Activated CD4-positive, alpha-beta T cell treated with anti-CD3 and anti-CD28 coated beads for 36 hours (primary cell): ENCODE measurements at regions of chr4 and their contacts with region 1.

Region 1: GRCh38 chr4:876780-877179 is 50.9 kb upstream of the CPLX1 start:
- DNase-seq: peak; percentile 30
- ATAC-seq: no peak
- H3K4me3 Mint-ChIP-seq: no peak overlapping the region
- H3K27ac Mint-ChIP-seq: no peak overlapping the region
- H3K4me1 Mint-ChIP-seq: peaks cover 28% of the 10 kb centered on the region
- H3K27me3 Mint-ChIP-seq: no peaks in the 10 kb centered on the region

Region 2: DNA sequence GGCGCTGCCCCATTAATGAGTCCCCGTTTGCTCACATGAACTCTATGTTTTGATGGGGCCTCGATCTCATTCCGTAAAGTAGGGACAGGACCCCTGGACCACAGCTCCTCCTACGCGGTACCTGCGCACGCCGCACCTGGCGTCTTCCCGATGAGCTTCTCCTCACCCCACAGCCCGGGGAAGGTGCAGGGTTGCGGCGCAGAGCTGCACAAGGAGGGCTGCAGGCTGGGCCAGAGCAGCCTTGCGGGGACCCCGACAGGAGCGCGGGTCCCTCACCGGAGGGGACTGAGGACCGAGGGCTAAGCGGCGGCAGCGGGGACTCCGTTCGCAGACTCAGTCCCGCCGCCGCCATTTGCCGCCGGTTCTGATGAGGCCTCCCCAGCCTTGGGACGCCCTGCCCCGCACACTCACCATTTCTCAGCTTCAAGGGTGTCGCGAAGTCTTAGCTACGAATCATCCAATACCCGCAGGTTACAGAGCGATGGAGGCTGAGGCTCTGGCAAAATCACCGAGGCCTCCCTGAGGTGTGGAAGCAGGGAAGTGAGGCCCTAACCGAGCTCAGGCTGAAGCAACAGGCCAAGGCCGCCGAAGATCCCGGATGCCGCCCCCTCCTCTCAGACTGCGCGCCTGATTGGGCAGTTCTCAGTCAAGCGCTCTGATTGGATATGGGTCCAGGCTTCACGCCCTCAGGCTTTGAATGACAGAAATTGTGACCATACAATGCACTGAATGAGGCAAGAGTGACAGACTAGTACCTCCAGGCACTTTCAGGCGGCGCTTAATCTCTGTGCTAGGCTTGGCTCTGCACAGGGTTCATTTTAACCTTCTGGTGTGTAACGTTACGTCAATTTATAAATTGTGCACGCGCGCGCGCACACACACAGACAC is 403.0 kb before region 1 on chr4:
- CTCF ChIA-PET with region 1: no interaction called
- POLR2A ChIA-PET with region 1: no interaction called
- intact Hi-C with region 1: no loop called
- DNase-seq: peak; percentile 96
- ATAC-seq: peak; percentile 99
- H3K4me3 Mint-ChIP-seq: peak overlapping the region; percentile 98
- H3K27ac Mint-ChIP-seq: peak overlapping the region; percentile 100
- H3K4me1 Mint-ChIP-seq: peaks cover 38% of the 10 kb centered on the region
- H3K27me3 Mint-ChIP-seq: no peaks in the 10 kb centered on the region

Region 3: GRCh38 chr4:742742-743311 is 134.0 kb before region 1 on chr4:
- CTCF ChIA-PET with region 1: no interaction called
- POLR2A ChIA-PET with region 1: no interaction called
- intact Hi-C with region 1: loop called in 1 of 2 experiments (anchors 5 kb)
- DNase-seq: peak; percentile 89
- ATAC-seq: peak; percentile 95
- H3K4me3 Mint-ChIP-seq: no peak overlapping the region
- H3K27ac Mint-ChIP-seq: no peak overlapping the region
- H3K4me1 Mint-ChIP-seq: no peaks in the 10 kb centered on the region
- H3K27me3 Mint-ChIP-seq: no peaks in the 10 kb centered on the region

Region 4: GRCh38 chr4:825238-825835 is 51.4 kb before region 1 on chr4:
- CTCF ChIA-PET with region 1: no interaction called
- POLR2A ChIA-PET with region 1: no interaction called
- intact Hi-C with region 1: loop called in 1 of 2 experiments (anchors 2 kb)
- DNase-seq: peak; percentile 50
- ATAC-seq: peak; percentile 37
- H3K4me3 Mint-ChIP-seq: no peak overlapping the region
- H3K27ac Mint-ChIP-seq: no peak overlapping the region
- H3K4me1 Mint-ChIP-seq: no peaks in the 10 kb centered on the region
- H3K27me3 Mint-ChIP-seq: peaks cover 35% of the 10 kb centered on the region

Region 5: DNA sequence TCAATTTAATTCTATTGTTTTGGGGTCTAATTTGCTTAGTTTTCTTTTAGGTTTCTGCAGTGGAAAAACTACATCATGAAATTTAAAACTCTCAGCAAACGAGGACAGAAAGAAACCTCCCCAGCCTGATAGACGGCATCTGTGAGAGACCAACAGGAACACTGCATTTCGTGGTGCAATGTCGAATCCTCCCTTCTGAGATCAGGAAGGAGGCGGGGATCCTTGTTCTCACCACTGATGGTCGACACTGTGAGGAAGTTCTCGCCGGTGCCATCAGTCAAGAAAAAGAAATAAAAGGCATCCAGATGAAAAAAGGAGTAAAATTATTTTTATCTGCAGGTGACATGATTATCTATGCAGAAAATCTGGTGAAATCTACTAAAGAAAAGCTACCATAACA is 38.8 kb after region 1 on chr4:
- CTCF ChIA-PET with region 1: no interaction called
- POLR2A ChIA-PET with region 1: no interaction called
- intact Hi-C with region 1: no loop called
- DNase-seq: peak; percentile 22
- ATAC-seq: peak; percentile 63
- H3K4me3 Mint-ChIP-seq: peak overlapping the region; percentile 46
- H3K27ac Mint-ChIP-seq: peak overlapping the region; percentile 17
- H3K4me1 Mint-ChIP-seq: peaks cover 42% of the 10 kb centered on the region
- H3K27me3 Mint-ChIP-seq: no peaks in the 10 kb centered on the region

Region 6: GRCh38 chr4:931960-932712 is 55.4 kb after region 1 on chr4 and contains the starts of genes GAK and TMEM175:
- CTCF ChIA-PET with region 1: interaction called, 8 read pairs
- POLR2A ChIA-PET with region 1: interaction called, 4 read pairs
- intact Hi-C with region 1: loop called (anchors 1 to 2 kb)
- DNase-seq: peak; percentile 98
- ATAC-seq: peak; percentile 95
- H3K4me3 Mint-ChIP-seq: peak within 1 kb of the TSS; percentile 87
- H3K27ac Mint-ChIP-seq: peak within 1 kb of the TSS; percentile 89
- H3K4me1 Mint-ChIP-seq: peaks cover 29% of the 10 kb centered on the region
- H3K27me3 Mint-ChIP-seq: no peaks in the 10 kb centered on the region
- total RNA-seq, gene GAK: 82.9 to 88.0 TPM
- total RNA-seq, gene TMEM175: 15.2 to 17.3 TPM

Region 7: DNA sequence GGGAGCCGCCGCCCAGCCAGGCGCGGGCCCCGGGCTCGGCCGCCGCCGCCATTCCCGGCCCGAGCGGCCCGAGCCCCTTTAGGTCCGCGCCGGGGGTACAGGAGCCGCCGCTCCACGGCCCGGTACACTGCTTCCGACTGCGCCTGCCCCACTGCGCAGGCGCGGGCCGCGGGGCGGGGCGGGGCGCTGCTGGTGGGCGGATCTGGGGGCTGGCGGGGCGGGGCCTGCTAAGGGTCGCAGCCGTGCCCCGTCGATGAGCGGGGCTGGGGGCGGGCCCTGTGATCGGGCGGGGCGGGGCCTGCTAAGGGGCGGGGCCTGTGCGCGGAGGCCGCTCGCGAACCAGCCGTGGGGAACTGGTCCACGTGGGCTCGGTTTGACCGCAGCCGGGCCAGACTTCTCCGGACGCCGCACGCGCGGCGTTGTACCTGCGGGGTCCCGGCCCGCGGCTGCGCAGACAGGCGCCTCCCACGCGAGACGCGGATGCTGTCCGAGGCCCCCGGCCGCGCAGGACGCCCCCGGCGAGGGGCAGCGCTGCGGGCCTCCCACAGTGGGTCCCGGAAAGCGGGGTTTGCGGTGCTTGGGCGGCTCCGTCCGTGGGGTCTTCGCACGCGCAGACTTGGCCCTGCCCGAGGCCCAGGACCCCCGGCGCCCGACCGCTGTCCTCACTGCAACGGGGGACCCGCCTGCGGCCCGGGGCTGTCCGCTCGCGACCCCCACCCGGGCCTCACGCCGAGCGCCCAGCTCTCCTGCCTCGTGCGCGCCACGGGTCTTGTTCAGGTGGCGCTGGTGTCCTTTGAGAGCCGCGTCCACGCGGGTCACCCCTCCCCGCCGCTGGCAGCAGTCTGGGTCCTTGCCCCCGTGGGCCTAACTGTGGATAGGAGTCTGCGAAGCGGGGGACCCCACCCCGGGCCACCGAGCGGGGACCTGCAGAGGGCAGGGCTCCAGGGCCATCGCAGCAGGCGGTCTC is 96.9 kb after region 1 on chr4 and contains the start of gene DGKQ:
- CTCF ChIA-PET with region 1: no interaction called
- POLR2A ChIA-PET with region 1: no interaction called
- intact Hi-C with region 1: loop called in 1 of 2 experiments (anchors 1 kb)
- DNase-seq: peak; percentile 93
- ATAC-seq: peak; percentile 96
- H3K4me3 Mint-ChIP-seq: peak within 1 kb of the TSS; percentile 58
- H3K27ac Mint-ChIP-seq: no peak within 1 kb of the TSS
- H3K4me1 Mint-ChIP-seq: peaks cover 6% of the 10 kb centered on the region
- H3K27me3 Mint-ChIP-seq: no peaks in the 10 kb centered on the region
- total RNA-seq, gene DGKQ: 9.3 to 11.3 TPM